Right ventricle myocardium inferior (tissue), 1 donor: ENCODE measurements at regions of chr14 and their contacts with region 1.

Region 1: GRCh38 chr14:29548948-29549370 is 378.7 kb downstream of the PRKD1 start:
- DNase-seq: no peak
- ATAC-seq: peak; percentile 69

Region 2: DNA sequence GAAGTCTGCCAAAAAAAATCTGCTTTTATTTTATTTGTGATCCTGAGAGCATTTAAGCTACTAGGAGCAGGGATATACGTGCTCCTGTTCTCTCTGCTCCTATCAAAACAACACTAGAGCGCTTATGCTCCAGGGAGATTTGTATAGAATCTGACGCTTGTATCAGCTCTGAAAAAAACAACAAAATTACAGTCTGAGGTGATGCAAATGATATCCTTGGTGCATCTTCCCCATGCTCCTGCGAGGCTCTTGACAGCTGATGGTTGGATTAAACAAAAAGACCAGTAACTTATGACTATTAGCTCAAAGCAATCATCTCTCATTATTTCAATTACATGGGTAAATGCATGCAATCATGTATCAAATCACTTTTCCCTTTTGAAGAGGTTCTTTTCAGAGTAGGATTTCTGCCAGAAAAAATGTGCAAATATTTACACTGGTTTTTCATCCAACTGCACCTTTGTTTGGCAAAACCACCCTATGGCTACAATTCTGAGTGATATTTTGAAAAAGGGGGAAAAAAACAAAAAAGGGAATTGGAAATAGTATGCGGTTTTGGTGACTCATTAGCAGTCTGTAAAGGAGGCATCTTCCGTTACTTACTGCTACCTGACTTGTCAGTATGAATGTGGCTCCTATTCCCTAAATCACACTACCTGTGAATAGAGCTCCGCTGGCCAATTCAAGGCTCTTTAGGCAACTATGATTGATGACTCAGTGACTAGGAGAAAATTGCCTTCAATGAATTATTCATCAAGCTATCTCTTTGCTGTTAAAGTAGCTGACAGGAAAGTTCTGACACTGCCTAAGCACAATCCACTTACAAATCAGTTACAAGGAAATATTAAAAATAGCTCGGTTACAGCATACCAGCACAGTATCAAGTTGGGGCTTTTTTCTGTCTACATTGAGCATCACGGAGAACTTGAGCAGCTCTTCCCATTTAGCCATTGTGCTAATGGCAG is 332.4 kb before region 1 on chr14:
- intact Hi-C with region 1: no loop called
- DNase-seq: no peak
- ATAC-seq: no peak

Region 3: GRCh38 chr14:29892327-29892726 is 343.4 kb after region 1 on chr14:
- intact Hi-C with region 1: no loop called
- DNase-seq: no peak
- ATAC-seq: no peak

Region 4: DNA sequence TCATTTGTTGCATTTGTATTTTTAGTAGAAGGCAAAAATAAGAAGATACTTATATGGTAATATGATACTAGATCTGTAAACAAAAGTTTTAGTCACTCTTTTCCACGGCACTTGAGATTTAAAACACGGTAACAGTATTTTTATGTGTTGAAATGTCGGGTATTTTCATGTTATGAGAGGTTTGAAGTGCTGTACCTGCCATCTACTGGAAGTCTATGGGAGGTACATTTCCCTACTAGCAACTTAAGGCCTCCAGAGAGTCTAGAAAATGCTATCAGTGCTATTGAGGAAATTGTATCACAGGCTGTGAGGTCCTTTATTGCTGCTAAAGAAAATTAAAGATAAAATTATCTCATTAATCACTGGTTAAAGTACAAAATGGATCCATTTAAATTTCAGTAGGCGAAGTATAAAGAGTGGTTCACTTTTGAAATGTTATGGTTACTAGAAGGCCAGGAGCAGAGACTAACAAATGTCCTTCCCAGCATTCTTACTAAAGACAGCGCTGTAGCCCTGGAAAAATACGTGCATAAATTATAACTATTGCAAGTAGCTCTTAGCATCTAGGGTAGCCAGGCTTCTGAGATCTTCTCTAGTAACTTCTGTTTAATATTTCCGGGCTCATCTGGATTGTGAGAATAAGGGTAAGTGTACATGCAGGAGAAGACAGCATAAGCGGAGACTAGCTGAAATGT is 456.3 kb after region 1 on chr14:
- intact Hi-C with region 1: loop called (anchors 2 kb)
- DNase-seq: no peak
- ATAC-seq: peak; percentile 54

Region 5: GRCh38 chr14:30214461-30215090 is 665.6 kb after region 1 on chr14:
- intact Hi-C with region 1: loop called (anchors 2 kb)
- DNase-seq: no peak
- ATAC-seq: peak; percentile 44

Region 6: GRCh38 chr14:30443368-30444007 is 894.5 kb after region 1 on chr14:
- intact Hi-C with region 1: loop called (anchors 10 kb)
- DNase-seq: no peak
- ATAC-seq: no peak